ENCODE measurements at regions of chr13 and their contacts with region 1.

Region 1: DNA sequence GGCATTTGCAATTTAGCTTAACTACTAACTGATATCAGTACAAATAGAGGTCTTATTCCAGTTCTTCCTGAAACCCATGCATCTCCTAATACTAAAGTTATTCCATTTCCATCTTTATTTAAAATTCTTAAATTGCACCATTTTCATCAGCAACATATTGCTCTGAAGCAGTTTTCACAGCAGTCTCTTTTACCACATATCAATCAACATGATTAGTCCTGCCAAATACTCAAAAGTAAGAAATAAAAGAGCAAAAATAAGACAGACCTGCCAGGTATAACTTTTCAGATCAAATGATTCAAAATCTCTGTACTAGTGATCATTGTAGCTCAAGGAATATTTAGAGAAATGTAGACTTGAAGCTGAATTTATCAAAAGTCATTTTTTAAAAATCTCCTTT is 141.7 kb downstream of the SLITRK1 start:
- DNase-seq: no peak
- H3K4me3 ChIP-seq: no peak overlapping the region
- H3K27ac ChIP-seq: no peak overlapping the region
- H3K4me1 ChIP-seq: no peaks in the 10 kb centered on the region
- H3K27me3 ChIP-seq: no peaks in the 10 kb centered on the region
- CTCF ChIP-seq: no peak
- POLR2A ChIP-seq: no peak

Region 2: DNA sequence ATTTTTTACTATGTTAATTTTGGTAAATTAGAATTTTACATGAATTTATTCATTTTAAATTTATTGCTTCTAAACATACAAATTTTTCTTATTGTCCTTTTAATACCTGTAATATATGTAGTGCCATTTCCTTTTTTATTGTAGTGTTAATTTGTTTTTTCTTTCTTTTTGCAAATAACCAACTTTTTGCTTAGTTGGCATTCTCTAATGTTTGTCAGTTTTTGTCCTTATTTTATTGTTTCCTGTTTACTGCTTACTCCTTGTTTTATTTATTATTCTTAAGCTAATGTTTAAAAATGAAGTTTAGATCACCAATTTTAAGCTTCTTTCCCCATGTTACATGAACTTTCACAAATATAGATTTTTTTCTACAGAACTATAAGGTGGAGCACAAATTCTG is 374.9 kb before region 1 on chr13:
- CTCF ChIA-PET with region 1: no interaction called
- POLR2A ChIA-PET with region 1: no interaction called
- dilution Hi-C with region 1: no loop called
- intact Hi-C with region 1: loop called (anchors 10 kb)
- DNase-seq: no peak
- H3K4me3 ChIP-seq: no peak overlapping the region
- H3K27ac ChIP-seq: no peak overlapping the region
- H3K4me1 ChIP-seq: no peaks in the 10 kb centered on the region
- H3K27me3 ChIP-seq: no peaks in the 10 kb centered on the region
- CTCF ChIP-seq: no peak
- POLR2A ChIP-seq: no peak

Measured in endothelial cell of umbilical vein (primary cell).